PC-9 (cell line): ENCODE measurements at regions of chr18 and their contacts with region 1.

Region 1: DNA sequence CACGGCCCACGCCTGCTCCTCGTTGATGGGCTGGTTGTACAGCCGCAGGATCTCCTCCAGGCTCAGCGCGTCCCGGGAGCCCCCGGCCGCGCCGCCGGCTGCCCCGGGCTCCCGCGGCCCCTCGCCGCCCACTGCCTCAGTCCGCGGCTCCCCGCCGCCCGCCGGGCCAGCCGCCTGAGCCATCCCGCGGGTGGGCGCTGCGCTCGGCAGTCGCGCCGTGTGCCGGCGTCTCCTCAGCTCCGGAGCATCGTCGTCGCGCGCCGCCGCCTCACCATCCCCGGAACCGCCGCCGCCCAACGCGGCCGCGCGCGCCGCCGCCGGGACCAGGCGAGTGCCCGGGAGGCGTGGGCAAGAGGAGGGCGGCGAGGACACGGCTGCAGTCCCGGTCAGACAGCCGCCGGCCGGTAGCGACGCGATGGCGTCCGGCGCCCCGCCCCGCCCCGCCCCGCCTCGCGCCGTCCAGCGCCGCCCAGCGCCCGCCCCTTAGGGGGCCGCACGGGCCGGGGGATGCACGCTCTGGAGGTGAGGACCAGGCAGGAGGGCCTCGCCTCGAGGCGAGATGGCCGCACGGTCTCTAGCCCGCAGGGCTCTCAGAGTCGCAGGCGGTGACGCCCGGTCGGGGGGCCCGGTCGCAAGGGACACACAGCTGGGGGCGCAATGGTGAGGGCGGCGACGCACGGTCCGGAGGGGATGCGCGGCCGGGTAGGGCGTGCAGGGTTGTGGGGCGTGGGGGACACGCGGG is at the start of gene SPIRE1:
- DNase-seq: peak in 1 of 2 experiments; percentile 79
- H3K4me3 ChIP-seq: peak within 1 kb of the TSS; percentile 86
- H3K27ac ChIP-seq: no peak within 1 kb of the TSS
- H3K4me1 ChIP-seq: peaks cover 29% of the 10 kb centered on the region
- H3K27me3 ChIP-seq: no peaks in the 10 kb centered on the region
- CTCF ChIP-seq: no peak
- total RNA-seq, gene SPIRE1: 26.1 and 36.4 TPM in 2 replicates

Region 2: DNA sequence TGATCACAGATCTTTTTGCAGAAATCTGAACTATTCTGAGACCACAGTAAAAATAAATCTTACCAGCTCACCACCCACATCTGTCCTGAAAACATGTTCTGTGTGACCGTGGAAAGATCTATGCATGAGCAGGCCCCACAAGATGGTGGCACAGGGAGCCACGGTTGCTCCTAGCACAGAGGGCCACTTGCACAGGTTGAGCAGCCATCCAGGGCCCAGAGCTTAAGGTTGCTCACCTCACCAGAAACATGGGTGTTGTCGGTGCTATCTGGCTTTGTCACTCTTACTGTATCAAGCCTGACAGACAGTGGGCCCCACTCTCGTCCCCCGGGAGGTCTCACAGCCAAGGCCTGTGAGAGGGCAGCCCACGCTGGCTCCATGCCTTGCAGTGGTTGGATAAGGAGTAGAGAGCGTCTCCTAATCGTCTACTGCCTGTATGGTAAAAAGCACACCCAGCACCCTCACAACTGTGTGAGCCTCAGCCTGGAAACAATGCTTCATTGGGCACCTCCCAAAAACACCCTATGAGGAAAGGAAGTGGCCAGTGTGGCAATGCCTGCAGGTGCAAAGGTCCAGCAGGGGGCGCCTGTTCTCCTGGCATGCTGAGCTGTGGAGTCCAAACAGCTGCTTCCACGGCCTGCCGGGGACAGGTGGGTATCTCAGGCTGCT is 330.2 kb before region 1 on chr18:
- CTCF ChIA-PET with region 1: interaction called, 3 read pairs
- POLR2A ChIA-PET with region 1: no interaction called
- intact Hi-C with region 1: loop called (anchors 1 kb)
- DNase-seq: peak; percentile 58 to 82
- H3K4me3 ChIP-seq: no peak overlapping the region
- H3K27ac ChIP-seq: no peak overlapping the region
- H3K4me1 ChIP-seq: no peaks in the 10 kb centered on the region
- H3K27me3 ChIP-seq: no peaks in the 10 kb centered on the region
- CTCF ChIP-seq: peak; percentile 91

Region 3: GRCh38 chr18:12597775-12598174 is 60.1 kb before region 1 on chr18:
- CTCF ChIA-PET with region 1: no interaction called
- POLR2A ChIA-PET with region 1: no interaction called
- intact Hi-C with region 1: loop called (anchors 2 kb)
- DNase-seq: peak; percentile 86 to 92
- H3K4me3 ChIP-seq: no peak overlapping the region
- H3K27ac ChIP-seq: peak overlapping the region; percentile 90
- H3K4me1 ChIP-seq: peaks cover 54% of the 10 kb centered on the region
- H3K27me3 ChIP-seq: no peaks in the 10 kb centered on the region
- CTCF ChIP-seq: no peak

Region 4: GRCh38 chr18:12606592-12607315 is 51.1 kb before region 1 on chr18:
- CTCF ChIA-PET with region 1: interaction called, 10 read pairs
- POLR2A ChIA-PET with region 1: no interaction called
- intact Hi-C with region 1: loop called (anchors 2 kb)
- DNase-seq: peak; percentile 11 to 95
- H3K4me3 ChIP-seq: peak overlapping the region; percentile 32; the same call in 1 of the 2 replicates
- H3K27ac ChIP-seq: peak overlapping the region; percentile 100
- H3K4me1 ChIP-seq: peaks cover 38% of the 10 kb centered on the region
- H3K27me3 ChIP-seq: no peaks in the 10 kb centered on the region
- CTCF ChIP-seq: no peak

Region 5: DNA sequence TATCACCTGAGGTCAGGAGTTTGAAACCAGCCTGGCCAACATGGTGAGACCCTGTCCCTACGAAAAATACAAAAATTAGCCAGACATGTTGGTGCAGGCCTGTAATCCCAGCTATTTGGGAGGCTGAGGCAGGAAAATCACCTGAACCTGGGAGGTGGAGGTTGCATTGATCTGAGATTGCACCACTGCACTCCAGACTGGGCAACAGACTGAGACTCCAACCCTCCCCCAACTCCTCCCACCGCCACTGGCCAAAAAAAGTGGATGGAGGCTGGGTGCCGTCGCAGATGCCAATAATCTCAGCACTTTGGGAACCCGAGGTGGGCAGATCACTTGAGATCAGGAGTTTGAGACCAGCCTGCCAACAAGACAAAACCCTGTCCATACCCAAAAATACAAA is 10.2 kb after region 1 on chr18:
- CTCF ChIA-PET with region 1: no interaction called
- POLR2A ChIA-PET with region 1: interaction called, 24 read pairs
- intact Hi-C with region 1: no loop called
- DNase-seq: no peak
- H3K4me3 ChIP-seq: no peak overlapping the region
- H3K27ac ChIP-seq: no peak overlapping the region
- H3K4me1 ChIP-seq: no peaks in the 10 kb centered on the region; the same call in 1 of the 2 replicates
- H3K27me3 ChIP-seq: no peaks in the 10 kb centered on the region
- CTCF ChIP-seq: no peak